Activated T-helper 1 cell treated with anti-CD3 and anti-CD28 coated beads, Interleukin-12 subunit alpha, Interleukin-12 subunit beta, Interleukin-2, Interleukin-4 antibody, amounts not matched to agents 30 ng/mL and 10 ng/mL and 1 ng/mL, durations not matched to agents 14 hours and 24 hours and 36 hours (primary cell): ENCODE measurements at regions of chr7 and their contacts with region 1.

Region 1: GRCh38 chr7:150753826-150754603 is 16.8 kb downstream of the GIMAP5 start:
- DNase-seq: no peak
- H3K4me3 Mint-ChIP-seq: peak overlapping the region; percentile 70
- H3K27ac Mint-ChIP-seq: peak overlapping the region; percentile 98
- H3K4me1 Mint-ChIP-seq: peaks cover 68% of the 10 kb centered on the region
- H3K27me3 Mint-ChIP-seq: peaks cover 3% of the 10 kb centered on the region

Region 2: DNA sequence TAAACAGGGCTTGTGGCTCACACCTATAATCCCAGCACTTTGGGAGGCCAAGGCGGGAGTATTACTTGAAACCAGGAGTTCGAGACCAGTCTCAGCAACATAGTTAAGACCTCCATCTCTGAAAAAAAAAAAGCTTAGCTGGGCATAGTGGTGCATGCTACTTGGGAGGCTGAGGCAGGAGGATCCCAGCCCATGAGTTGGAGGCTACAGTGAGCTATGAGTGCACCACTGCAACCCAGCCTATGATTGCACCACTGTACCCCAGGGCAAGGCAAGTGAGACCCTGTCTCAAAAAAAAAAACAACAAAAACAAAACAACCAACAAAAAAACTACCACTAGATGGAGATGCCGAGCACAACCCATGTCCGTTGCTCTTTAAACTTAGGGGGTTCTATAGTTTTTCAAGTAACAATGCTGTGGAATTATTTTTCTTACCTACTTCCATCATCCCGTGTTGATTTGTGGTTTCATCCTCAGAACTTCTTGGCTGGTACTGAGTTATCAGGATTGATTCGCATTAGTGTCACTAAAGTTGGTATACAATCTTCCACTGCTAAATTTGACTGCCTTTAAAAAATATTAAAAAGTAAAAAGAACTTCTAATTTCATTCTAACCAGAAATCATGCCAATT is 397.6 kb before region 1 on chr7:
- intact Hi-C with region 1: loop called (anchors 1 kb)
- DNase-seq: no peak
- H3K4me3 Mint-ChIP-seq: no peak overlapping the region
- H3K27ac Mint-ChIP-seq: no peak overlapping the region
- H3K4me1 Mint-ChIP-seq: peaks cover 44% of the 10 kb centered on the region
- H3K27me3 Mint-ChIP-seq: peaks cover 8% of the 10 kb centered on the region

Region 3: GRCh38 chr7:150439967-150440366 is 314.0 kb before region 1 on chr7:
- intact Hi-C with region 1: loop called (anchors 2 kb)
- DNase-seq: no peak
- H3K4me3 Mint-ChIP-seq: peak overlapping the region; percentile 0
- H3K27ac Mint-ChIP-seq: peak overlapping the region; percentile 66
- H3K4me1 Mint-ChIP-seq: peaks cover 41% of the 10 kb centered on the region
- H3K27me3 Mint-ChIP-seq: peaks cover 3% of the 10 kb centered on the region

Region 4: GRCh38 chr7:150514748-150515222 is 239.2 kb before region 1 on chr7 and contains the start of gene GIMAP7:
- intact Hi-C with region 1: loop called (anchors 2 kb)
- DNase-seq: peak; percentile 68
- H3K4me3 Mint-ChIP-seq: peak within 1 kb of the TSS; percentile 96
- H3K27ac Mint-ChIP-seq: peak within 1 kb of the TSS; percentile 98
- H3K4me1 Mint-ChIP-seq: peaks cover 65% of the 10 kb centered on the region
- H3K27me3 Mint-ChIP-seq: no peaks in the 10 kb centered on the region
- total RNA-seq, gene GIMAP7: 46.9 and 55.1 TPM in 2 replicates

Region 5: GRCh38 chr7:150620617-150621371 is 133.2 kb before region 1 on chr7:
- intact Hi-C with region 1: loop called (anchors 1 kb)
- DNase-seq: no peak
- H3K4me3 Mint-ChIP-seq: peak overlapping the region; percentile 57
- H3K27ac Mint-ChIP-seq: peak overlapping the region; percentile 86
- H3K4me1 Mint-ChIP-seq: peaks cover 63% of the 10 kb centered on the region
- H3K27me3 Mint-ChIP-seq: no peaks in the 10 kb centered on the region

Region 6: GRCh38 chr7:150675714-150676113 is 78.3 kb before region 1 on chr7:
- intact Hi-C with region 1: loop called (anchors 2 kb)
- DNase-seq: no peak
- H3K4me3 Mint-ChIP-seq: no peak overlapping the region
- H3K27ac Mint-ChIP-seq: peak overlapping the region; percentile 91
- H3K4me1 Mint-ChIP-seq: peaks cover 81% of the 10 kb centered on the region
- H3K27me3 Mint-ChIP-seq: no peaks in the 10 kb centered on the region

Region 7: GRCh38 chr7:150722431-150722931 is 31.5 kb before region 1 on chr7:
- intact Hi-C with region 1: no loop called
- DNase-seq: no peak
- H3K4me3 Mint-ChIP-seq: peak overlapping the region; percentile 74
- H3K27ac Mint-ChIP-seq: peak overlapping the region; percentile 71
- H3K4me1 Mint-ChIP-seq: peaks cover 81% of the 10 kb centered on the region
- H3K27me3 Mint-ChIP-seq: no peaks in the 10 kb centered on the region

Region 8: DNA sequence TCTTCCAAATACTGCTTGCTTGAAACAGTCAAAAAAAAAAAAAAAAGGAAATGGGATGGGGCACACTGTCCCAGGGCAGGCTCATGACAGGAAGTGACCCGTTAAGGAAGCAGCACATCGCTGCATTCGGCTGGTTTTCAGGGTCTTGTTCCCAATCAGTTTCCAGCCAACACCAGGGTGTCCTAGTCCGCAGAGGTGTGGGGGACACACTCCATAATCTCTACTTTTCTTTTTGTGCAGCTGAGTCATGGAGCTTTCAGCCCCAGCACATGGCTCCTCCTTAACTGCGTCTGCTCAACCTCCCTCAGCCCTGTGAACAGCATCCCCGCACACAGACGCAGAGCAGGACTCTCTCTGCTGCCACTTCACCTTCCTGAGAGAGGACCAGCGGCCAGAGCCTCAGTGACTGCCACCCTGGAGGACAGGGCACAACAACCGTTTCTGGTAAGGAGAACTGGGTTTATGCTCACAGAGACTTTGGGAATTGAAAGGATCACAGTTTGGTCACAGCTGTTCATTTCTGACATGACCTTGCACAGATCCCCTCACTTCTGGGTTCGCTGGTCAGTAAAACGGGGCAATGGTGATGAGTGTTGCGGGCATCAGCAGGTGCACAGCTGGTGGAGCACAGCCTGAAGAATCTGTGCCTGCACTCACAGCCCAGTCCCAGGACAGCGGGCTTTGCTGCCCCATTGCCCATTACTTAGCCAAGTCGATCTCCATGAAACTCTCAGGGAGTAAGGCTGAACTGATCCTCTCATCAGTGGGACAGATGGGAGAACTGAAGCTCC is 16.6 kb before region 1 on chr7 and contains the start of gene GIMAP5:
- intact Hi-C with region 1: loop called (anchors 1 kb)
- DNase-seq: peak; percentile 51
- H3K4me3 Mint-ChIP-seq: peak within 1 kb of the TSS; percentile 97
- H3K27ac Mint-ChIP-seq: peak within 1 kb of the TSS; percentile 99
- H3K4me1 Mint-ChIP-seq: peaks cover 88% of the 10 kb centered on the region
- H3K27me3 Mint-ChIP-seq: no peaks in the 10 kb centered on the region
- total RNA-seq, gene GIMAP5: 53.8 and 59.7 TPM in 2 replicates